AG04449 (cell line): ENCODE measurements at regions of chr12 and their contacts with region 1.

Region 1: DNA sequence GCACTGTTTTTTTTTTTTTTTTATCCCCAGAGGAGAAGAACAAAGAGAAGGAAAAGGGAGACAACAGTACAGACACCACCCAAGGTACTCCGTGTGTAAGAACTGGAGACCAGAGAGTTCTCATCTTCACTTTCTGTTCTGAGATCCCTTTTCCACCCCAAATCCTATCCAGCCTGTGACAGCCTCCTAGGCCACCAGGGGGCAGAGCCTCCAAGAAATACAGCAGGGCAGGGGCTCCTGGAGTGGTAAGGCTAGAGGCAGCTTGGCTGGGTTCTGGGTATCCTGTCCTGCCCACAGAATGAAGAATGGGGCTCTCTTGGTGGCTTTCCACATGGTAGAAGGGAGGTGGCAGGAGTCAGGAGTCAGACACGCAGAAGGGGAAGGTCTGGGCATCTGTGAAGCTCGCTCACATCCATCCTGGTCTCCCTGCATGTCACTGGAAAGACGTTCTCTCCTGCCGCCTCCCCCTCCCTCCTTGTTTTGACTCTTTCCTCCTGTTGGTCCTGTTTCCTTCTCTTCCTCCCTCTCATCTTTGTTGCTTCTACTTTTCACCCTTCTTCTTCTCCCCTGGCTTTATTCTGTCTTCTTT is 12.0 kb downstream of the CLSTN3 start:
- DNase-seq: no peak
- H3K4me3 ChIP-seq: no peak overlapping the region
- CTCF ChIP-seq: peak; percentile 82

Region 2: GRCh38 chr12:7060353-7060954 is 81.7 kb before region 1 on chr12 and contains the start of gene C1S:
- CTCF ChIA-PET with region 1: interaction called, 25 read pairs
- POLR2A ChIA-PET with region 1: no interaction called
- DNase-seq: peak; percentile 96
- H3K4me3 ChIP-seq: peak within 1 kb of the TSS; percentile 53
- CTCF ChIP-seq: peak; percentile 76

Region 3: GRCh38 chr12:7129872-7130680 is 12.1 kb before region 1 on chr12 and contains the start of gene CLSTN3:
- CTCF ChIA-PET with region 1: interaction called, 44 read pairs
- POLR2A ChIA-PET with region 1: no interaction called
- DNase-seq: no peak
- H3K4me3 ChIP-seq: peak within 1 kb of the TSS; percentile 81
- CTCF ChIP-seq: no peak

Region 4: DNA sequence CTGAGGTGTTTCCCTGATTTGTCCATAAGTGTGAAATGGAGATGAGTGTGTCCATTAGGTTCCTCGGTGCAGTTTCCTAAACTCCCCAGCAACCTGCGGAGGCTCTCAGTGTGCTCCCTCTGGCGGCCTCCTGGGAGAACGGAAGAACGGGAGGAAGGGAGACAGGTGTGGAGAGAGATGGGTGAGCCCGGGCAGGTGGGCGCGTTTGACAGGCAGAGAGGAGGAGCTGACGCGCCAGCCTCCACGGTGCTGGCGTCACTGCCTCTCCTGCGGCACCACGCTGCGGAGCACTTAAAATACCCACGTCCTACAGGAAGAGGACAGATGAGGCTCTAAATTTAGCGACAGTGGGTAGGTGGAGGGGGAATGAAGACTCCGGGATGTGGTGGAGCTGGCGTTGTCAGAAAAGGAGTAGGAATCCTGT is 20.6 kb after region 1 on chr12:
- CTCF ChIA-PET with region 1: interaction called, 151 read pairs
- POLR2A ChIA-PET with region 1: no interaction called
- DNase-seq: no peak
- H3K4me3 ChIP-seq: no peak overlapping the region
- CTCF ChIP-seq: peak; percentile 57

Region 5: DNA sequence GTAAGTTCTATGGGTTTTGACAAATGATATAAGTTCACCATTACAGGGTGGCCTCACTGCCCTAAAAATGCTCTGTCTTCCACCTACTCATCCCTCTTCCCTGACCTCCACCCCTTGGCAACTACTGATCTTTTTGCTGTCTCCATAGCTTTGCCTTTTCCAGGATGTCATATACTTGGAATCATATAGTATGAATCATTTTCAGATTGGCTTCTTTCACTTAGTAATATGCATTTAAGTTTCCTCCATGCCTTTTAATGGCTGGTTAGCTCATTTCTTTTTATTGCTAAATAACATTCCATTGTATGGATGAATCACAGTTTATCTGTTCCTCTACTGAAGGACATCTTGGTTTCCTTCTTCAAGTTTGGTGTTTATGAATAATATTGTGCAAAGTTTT is 33.3 kb after region 1 on chr12:
- CTCF ChIA-PET with region 1: interaction called, 23 read pairs
- POLR2A ChIA-PET with region 1: no interaction called
- DNase-seq: no peak
- H3K4me3 ChIP-seq: no peak overlapping the region
- CTCF ChIP-seq: no peak

Region 6: GRCh38 chr12:7188562-7189397 is 46.6 kb after region 1 on chr12:
- CTCF ChIA-PET with region 1: interaction called, 100 read pairs
- POLR2A ChIA-PET with region 1: no interaction called
- DNase-seq: no peak
- H3K4me3 ChIP-seq: peak overlapping the region; percentile 93
- CTCF ChIP-seq: peak; percentile 94